ENCODE measurements at regions of chr9 and their contacts with region 1.

Region 1: DNA sequence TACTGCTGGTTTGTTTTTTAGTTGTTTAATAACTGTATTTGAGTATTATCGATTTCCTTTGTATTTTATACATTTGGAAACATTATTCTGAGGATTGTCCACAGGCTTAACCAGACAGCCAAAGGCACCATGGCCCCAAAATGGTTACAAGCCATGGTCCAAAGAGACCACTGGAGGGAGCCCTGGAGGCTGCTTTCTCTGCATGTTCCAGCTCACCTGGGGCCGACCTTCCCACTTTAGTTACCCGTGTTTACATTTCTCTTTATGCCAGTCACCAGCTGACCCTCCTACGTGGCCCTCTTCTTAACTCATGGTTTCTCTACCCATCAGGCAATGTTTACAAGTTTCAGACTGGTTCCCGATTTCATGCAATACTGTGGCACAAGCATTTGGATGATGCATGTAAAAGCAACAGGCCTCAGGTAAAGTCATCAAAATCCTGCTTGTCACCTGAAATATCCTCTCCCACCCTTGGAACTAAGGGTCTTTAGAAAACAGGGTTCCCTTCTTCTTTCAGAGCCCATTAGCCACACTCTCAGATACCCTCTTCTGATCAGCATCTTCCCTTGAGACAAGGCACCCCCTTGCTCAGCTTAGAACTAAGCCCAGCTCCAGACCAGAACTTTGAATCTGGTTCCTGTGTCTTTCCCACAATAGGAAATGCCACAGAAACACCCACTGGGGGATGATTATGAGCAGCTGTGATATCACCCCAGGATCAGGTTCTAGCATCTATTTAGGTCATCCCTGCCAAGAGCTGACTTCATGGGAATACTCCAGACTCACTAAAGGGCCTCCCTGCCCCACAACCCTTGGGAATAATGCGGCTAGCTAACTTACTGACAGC is 49.9 kb upstream of the GARNL3 start:
- DNase-seq: peak in 1 of 2 donors; percentile 73
- H3K4me3 ChIP-seq: no peak overlapping the region
- H3K27ac ChIP-seq: no peak overlapping the region
- H3K4me1 ChIP-seq: no peaks in the 10 kb centered on the region
- H3K27me3 ChIP-seq: no peaks in the 10 kb centered on the region
- CTCF ChIP-seq: peak; percentile 68 to 75

Region 2: DNA sequence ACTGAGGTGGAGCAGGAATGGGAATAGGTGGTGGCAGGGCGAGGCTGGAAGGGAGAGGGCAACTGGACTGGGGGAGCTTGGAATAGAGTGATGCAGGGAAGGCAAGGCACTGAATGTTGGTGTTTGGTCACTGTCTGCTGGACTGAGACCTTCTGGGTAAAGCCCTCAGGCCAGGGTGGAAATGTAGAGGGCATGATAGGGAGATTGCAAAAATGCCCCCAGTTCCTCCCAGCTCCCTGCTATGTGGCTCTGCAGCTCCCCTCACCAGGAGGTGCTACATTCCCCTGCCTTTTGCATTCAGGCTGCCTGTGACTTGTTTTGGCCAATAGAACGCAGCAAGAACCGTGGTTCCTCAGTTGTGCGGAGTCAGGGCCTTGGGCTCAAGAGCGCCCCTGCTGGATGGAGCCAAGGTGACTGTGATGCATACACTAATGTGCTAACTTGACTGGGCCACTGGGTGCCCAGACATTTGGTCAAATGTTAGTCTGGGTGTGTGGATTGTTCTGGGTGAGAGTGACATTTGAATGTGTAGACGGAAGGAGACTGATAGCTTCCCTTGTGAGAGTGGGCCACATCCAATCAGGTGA is 1011.4 kb before region 1 on chr9:
- intact Hi-C with region 1: no loop called
- DNase-seq: no peak
- H3K4me3 ChIP-seq: no peak overlapping the region
- H3K27ac ChIP-seq: no peak overlapping the region
- H3K4me1 ChIP-seq: no peaks in the 10 kb centered on the region
- H3K27me3 ChIP-seq: peaks cover 0 to 56% of the 10 kb centered on the region in 2 donors
- CTCF ChIP-seq: no peak

Region 3: DNA sequence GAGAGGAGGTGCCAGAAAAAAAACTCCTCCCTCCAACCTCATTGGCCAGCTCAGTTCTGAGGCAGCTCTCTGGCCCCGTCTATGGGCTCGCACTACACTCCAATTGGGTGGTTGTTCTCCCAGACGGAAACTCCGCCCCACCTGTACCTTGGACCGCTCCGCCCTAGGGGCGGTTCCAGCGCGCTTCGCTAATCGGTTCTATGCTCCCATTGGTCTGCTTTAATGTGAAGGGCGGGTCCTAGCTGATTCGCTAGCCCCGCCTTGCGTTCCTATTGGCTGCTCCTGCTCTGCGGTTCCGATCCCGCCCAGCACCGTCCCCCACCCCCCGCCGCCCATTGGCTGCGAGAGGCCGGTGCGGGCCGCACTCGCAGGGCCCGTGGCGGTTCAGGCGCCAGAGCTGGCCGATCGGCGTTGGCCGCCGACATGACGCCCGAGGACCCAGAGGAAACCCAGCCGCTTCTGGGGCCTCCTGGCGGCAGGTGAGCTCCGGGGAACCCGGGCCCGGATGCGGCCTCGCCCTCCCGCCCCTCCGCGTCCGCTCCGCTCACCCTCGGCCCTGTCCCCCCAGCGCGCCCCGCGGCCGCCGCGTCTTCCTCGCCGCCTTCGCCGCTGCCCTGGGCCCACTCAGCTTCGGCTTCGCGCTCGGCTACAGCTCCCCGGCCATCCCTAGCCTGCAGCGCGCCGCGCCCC is 182.3 kb after region 1 on chr9 and contains the start of gene SLC2A8:
- intact Hi-C with region 1: loop called (anchors 5 kb)
- DNase-seq: peak; percentile 98 to 100
- H3K4me3 ChIP-seq: peak within 1 kb of the TSS; percentile 89 to 91
- H3K27ac ChIP-seq: peak within 1 kb of the TSS; percentile 87 to 95
- H3K4me1 ChIP-seq: peaks cover 0 to 25% (median 15%) of the 10 kb centered on the region in 4 donors
- H3K27me3 ChIP-seq: no peaks in the 10 kb centered on the region
- CTCF ChIP-seq: peak in 1 of 2 experiments; percentile 29

Measured in tibial artery (tissue), 4 donors.